ENCODE measurements at regions of chr1 and their contacts with region 1.

Region 1: GRCh38 chr1:47192458-47193384 is 2.9 kb upstream of the PDZK1IP1 start:
- DNase-seq: peak; percentile 82 to 89
- ATAC-seq: peak; percentile 58
- H3K4me3 ChIP-seq: no peak overlapping the region
- H3K27ac ChIP-seq: no peak overlapping the region
- H3K4me1 ChIP-seq: peaks cover 0 to 3% of the 10 kb centered on the region in 2 donors
- H3K27me3 ChIP-seq: no peaks in the 10 kb centered on the region

Region 2: DNA sequence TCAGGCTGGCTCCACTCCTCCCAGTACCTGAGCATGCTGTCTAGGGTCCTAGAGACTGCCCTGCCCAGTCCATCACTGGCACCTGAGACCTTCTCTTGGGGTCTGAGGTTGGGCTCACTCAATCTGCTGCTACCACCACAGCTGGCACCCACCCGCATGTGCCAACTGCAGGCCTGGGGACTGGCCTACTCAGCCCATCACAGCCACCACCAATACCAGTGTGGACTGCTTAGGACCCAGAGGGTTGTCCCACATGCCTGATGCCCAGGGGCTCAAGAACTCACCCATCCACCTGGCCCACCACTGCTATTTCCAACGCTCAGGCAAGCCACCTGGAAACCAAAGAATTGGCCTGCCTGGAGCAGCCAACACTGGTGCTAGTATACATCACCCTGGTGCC is 330.4 kb before region 1 on chr1:
- intact Hi-C with region 1: no loop called
- DNase-seq: no peak
- ATAC-seq: no peak
- H3K4me3 ChIP-seq: no peak overlapping the region
- H3K27ac ChIP-seq: no peak overlapping the region
- H3K4me1 ChIP-seq: no peaks in the 10 kb centered on the region
- H3K27me3 ChIP-seq: no peaks in the 10 kb centered on the region

Region 3: GRCh38 chr1:47231301-47232186 is 38.8 kb after region 1 on chr1:
- intact Hi-C with region 1: loop called in 1 of 2 experiments (anchors 5 kb)
- DNase-seq: peak in 1 of 2 donors; percentile 61
- ATAC-seq: peak; percentile 40
- H3K4me3 ChIP-seq: no peak overlapping the region
- H3K27ac ChIP-seq: no peak overlapping the region
- H3K4me1 ChIP-seq: no peaks in the 10 kb centered on the region
- H3K27me3 ChIP-seq: no peaks in the 10 kb centered on the region

Region 4: GRCh38 chr1:47317841-47318240 is 125.1 kb after region 1 on chr1:
- intact Hi-C with region 1: loop called in 1 of 2 experiments (anchors 5 kb)
- DNase-seq: no peak
- ATAC-seq: no peak
- H3K4me3 ChIP-seq: no peak overlapping the region
- H3K27ac ChIP-seq: no peak overlapping the region
- H3K4me1 ChIP-seq: no peaks in the 10 kb centered on the region
- H3K27me3 ChIP-seq: no peaks in the 10 kb centered on the region

Region 5: GRCh38 chr1:47424336-47424982 is 231.7 kb after region 1 on chr1:
- intact Hi-C with region 1: loop called (anchors 5 kb)
- DNase-seq: no peak
- ATAC-seq: peak; percentile 38
- H3K4me3 ChIP-seq: no peak overlapping the region
- H3K27ac ChIP-seq: no peak overlapping the region
- H3K4me1 ChIP-seq: no peaks in the 10 kb centered on the region
- H3K27me3 ChIP-seq: no peaks in the 10 kb centered on the region

Region 6: GRCh38 chr1:47432071-47433036 is 239.6 kb after region 1 on chr1:
- intact Hi-C with region 1: loop called in 1 of 2 experiments (anchors 5 kb)
- DNase-seq: peak; percentile 87 to 91
- ATAC-seq: peak; percentile 75
- H3K4me3 ChIP-seq: no peak overlapping the region
- H3K27ac ChIP-seq: no peak overlapping the region
- H3K4me1 ChIP-seq: no peaks in the 10 kb centered on the region
- H3K27me3 ChIP-seq: no peaks in the 10 kb centered on the region

Region 7: DNA sequence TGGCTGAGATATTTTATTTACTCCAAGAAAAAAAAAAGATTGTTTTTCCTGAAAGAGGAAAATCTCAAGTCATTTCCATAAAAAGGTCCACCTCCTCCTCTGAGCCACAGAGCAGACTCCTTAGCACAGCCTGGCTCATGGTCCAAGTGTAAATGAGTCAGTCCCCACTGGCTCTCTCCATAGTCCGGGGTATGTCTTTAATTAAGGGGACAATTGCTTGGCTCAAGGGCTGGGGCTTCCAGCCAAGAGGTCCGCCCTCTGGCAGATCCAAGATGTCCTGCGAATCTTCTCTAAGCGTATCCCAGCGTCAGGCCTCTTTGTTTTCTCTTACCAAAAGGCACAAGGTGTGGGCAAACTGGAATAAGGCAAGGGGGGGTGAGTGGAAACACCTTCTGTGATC is 278.4 kb after region 1 on chr1:
- intact Hi-C with region 1: no loop called
- DNase-seq: peak; percentile 75 to 81
- ATAC-seq: peak; percentile 83
- H3K4me3 ChIP-seq: no peak overlapping the region
- H3K27ac ChIP-seq: no peak overlapping the region
- H3K4me1 ChIP-seq: no peaks in the 10 kb centered on the region
- H3K27me3 ChIP-seq: no peaks in the 10 kb centered on the region

Region 8: GRCh38 chr1:47725992-47726855 is 533.5 kb after region 1 on chr1:
- intact Hi-C with region 1: loop called in 1 of 2 experiments (anchors 5 kb)
- DNase-seq: peak; percentile 86 to 93
- ATAC-seq: peak; percentile 89
- H3K4me3 ChIP-seq: no peak overlapping the region
- H3K27ac ChIP-seq: no peak overlapping the region
- H3K4me1 ChIP-seq: no peaks in the 10 kb centered on the region
- H3K27me3 ChIP-seq: no peaks in the 10 kb centered on the region

Measured in aorta (tissue), 5 donors.